Left colon (tissue), 2 donors: ENCODE measurements at regions of chr6 and their contacts with region 1.

Region 1: GRCh38 chr6:167298153-167298552 is 7.0 kb downstream of the UNC93A start:
- DNase-seq: no peak
- ATAC-seq: no peak

Region 2: DNA sequence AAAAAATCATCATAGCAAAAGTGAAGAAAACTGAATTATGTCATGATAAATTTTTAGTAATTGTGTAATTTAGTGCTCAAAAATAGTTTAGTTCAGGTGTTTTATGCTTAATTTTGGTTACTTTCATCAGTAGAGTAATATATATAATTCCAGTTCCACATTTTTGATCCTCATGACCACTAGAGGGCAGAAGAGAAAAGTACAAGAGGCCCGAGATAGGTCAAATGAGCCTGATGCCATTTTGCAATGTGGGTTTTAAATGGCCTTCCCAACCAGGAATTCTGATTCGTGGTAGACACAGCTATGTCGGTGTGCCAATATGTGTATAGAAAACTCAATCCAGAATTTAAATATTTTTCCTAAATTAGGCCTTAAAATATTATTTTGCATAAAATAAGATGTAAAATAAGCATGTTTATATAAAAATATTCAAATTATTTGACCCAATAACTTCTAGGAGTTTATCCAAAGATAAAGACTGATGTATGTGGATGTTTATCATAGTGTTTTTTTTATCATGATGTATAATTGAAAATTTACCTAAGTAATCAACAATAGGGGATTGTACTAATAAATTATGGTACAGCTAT is 511.4 kb before region 1 on chr6:
- intact Hi-C with region 1: no loop called
- DNase-seq: no peak
- ATAC-seq: peak; percentile 71

Region 3: GRCh38 chr6:167350731-167351655 is 52.8 kb after region 1 on chr6:
- intact Hi-C with region 1: loop called in 1 of 2 experiments (anchors 10 kb)
- DNase-seq: peak; percentile 76 to 87
- ATAC-seq: peak; percentile 89